Activated T-helper 2 cell treated with anti-CD3 and anti-CD28 coated beads, Interferon-gamma antibody, Interleukin-2, Interleukin-4, amounts not matched to agents 10 μg/mL and 5 μg/mL and 100 μg/mL, durations not matched to agents 14 hours and 24 hours and 36 hours (primary cell): ENCODE measurements at regions of chr7 and their contacts with region 1.

Region 1: GRCh38 chr7:7761340-7761980 is 43.1 kb upstream of the RPA3 start:
- DNase-seq: no peak
- H3K4me3 Mint-ChIP-seq: peak overlapping the region; percentile 86
- H3K27ac Mint-ChIP-seq: peak overlapping the region; percentile 83
- H3K4me1 Mint-ChIP-seq: peaks cover 38% of the 10 kb centered on the region
- H3K27me3 Mint-ChIP-seq: no peaks in the 10 kb centered on the region

Region 2: DNA sequence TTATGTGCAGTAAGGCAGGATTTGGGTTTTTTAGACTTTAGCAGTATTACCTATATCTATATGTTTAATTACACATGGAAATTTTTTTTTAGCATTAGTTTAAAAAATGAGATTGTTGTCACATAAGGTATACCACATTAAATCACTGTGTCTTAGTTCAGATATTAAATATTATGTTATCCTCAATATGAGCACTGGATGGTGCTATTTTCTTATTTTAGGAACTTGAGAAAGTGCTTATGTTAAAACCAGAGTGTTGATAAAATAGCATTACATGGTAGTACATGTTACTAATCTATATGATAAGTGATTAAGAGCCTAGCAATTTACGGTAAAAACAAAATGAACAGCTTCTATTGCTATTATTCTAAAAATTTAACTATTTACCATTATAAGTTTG is 166.0 kb before region 1 on chr7:
- intact Hi-C with region 1: loop called (anchors 2 kb)
- DNase-seq: no peak
- H3K4me3 Mint-ChIP-seq: no peak overlapping the region
- H3K27ac Mint-ChIP-seq: no peak overlapping the region
- H3K4me1 Mint-ChIP-seq: peaks cover 2% of the 10 kb centered on the region
- H3K27me3 Mint-ChIP-seq: no peaks in the 10 kb centered on the region

Region 3: GRCh38 chr7:7719236-7719635 is 42.2 kb before region 1 on chr7:
- intact Hi-C with region 1: loop called (anchors 2 kb)
- DNase-seq: peak; percentile 45
- H3K4me3 Mint-ChIP-seq: no peak overlapping the region
- H3K27ac Mint-ChIP-seq: peak overlapping the region; percentile 47
- H3K4me1 Mint-ChIP-seq: peaks cover 23% of the 10 kb centered on the region
- H3K27me3 Mint-ChIP-seq: no peaks in the 10 kb centered on the region

Region 4: GRCh38 chr7:7732566-7733290 is 28.7 kb before region 1 on chr7:
- intact Hi-C with region 1: no loop called
- DNase-seq: no peak
- H3K4me3 Mint-ChIP-seq: no peak overlapping the region
- H3K27ac Mint-ChIP-seq: no peak overlapping the region
- H3K4me1 Mint-ChIP-seq: no peaks in the 10 kb centered on the region
- H3K27me3 Mint-ChIP-seq: no peaks in the 10 kb centered on the region

Region 5: DNA sequence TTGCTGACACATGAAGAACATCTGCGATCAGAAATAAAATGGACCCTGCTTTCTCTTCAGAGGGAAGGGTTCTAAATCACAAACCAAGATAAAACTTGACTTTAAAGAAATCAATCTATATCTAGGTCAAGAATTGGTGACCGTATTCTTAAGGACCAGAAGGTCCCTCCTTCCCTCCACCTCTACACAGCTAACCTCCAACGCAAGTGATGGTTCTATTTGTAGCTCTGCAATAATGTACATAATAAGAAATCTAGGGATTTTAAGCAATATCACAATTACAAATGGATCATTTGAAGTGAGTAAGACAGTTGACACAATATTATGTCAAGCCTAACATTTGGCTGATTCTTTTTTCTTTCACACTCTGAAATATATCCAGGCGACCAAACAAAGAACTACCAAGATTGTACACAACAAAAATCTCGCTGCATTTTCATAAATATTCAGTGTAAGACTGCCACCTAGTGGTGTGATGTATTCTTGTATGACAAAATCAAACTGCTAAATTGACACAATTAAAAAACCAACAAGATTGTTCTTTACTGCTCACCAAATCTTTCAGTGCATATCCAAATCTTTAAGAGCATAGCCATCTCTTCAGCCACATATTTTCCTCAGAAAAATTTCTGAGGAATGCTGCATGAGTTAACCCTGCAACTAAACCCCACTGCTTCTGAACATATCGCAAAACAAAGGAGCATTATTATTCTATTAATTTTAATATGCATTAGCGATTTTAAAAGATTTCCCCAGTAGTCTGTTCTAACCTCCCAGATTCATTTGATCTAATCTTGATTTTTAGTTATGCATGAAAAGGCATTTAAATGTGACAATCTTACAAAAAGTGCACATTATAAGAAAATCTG is 456.0 kb after region 1 on chr7:
- intact Hi-C with region 1: loop called (anchors 5 kb)
- DNase-seq: no peak
- H3K4me3 Mint-ChIP-seq: no peak overlapping the region
- H3K27ac Mint-ChIP-seq: no peak overlapping the region
- H3K4me1 Mint-ChIP-seq: peaks cover 34% of the 10 kb centered on the region
- H3K27me3 Mint-ChIP-seq: no peaks in the 10 kb centered on the region

Region 6: GRCh38 chr7:8295638-8296361 is 534.3 kb after region 1 on chr7:
- intact Hi-C with region 1: loop called (anchors 5 kb)
- DNase-seq: peak; percentile 14
- H3K4me3 Mint-ChIP-seq: no peak overlapping the region
- H3K27ac Mint-ChIP-seq: no peak overlapping the region
- H3K4me1 Mint-ChIP-seq: peaks cover 2% of the 10 kb centered on the region
- H3K27me3 Mint-ChIP-seq: peaks cover 12% of the 10 kb centered on the region

Region 7: GRCh38 chr7:9013940-9014339 is 1252.5 kb after region 1 on chr7:
- intact Hi-C with region 1: no loop called
- DNase-seq: no peak
- H3K4me3 Mint-ChIP-seq: no peak overlapping the region
- H3K27ac Mint-ChIP-seq: no peak overlapping the region
- H3K4me1 Mint-ChIP-seq: no peaks in the 10 kb centered on the region
- H3K27me3 Mint-ChIP-seq: no peaks in the 10 kb centered on the region